ENCODE measurements at regions of chr10 and their contacts with region 1.

Region 1: DNA sequence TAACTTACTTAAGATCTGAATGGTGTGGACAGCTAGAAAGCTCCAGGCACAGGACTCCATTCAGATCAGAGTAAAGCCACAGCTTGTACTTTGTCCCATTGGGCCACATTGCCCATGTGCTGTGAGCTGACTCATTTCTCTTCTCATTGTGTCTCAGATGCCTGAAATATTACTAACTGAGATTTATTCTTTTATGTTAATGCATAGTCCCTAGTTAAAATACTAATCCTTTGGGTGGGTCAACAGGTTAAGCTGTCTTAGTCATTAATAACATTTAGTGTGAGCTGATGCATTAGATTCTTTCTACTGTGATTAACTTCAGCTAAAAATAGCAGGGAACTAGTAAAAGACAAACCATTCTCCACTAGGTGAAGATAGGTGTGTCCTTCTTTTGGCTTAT is 104.7 kb upstream of the ARMC3 start:
- DNase-seq: peak; percentile 81
- H3K4me3 ChIP-seq: no peak overlapping the region
- H3K27ac ChIP-seq: peak overlapping the region; percentile 68
- H3K4me1 ChIP-seq: peaks cover 38% of the 10 kb centered on the region
- H3K27me3 ChIP-seq: no peaks in the 10 kb centered on the region
- CTCF ChIP-seq: no peak
- POLR2A ChIP-seq: no peak

Region 2: GRCh38 chr10:22752272-22752889 is 70.7 kb before region 1 on chr10:
- CTCF ChIA-PET with region 1: interaction called, 4 read pairs
- POLR2A ChIA-PET with region 1: no interaction called
- dilution Hi-C with region 1: no loop called
- intact Hi-C with region 1: loop called (anchors 5 kb)
- DNase-seq: no peak
- H3K4me3 ChIP-seq: no peak overlapping the region
- H3K27ac ChIP-seq: no peak overlapping the region
- H3K4me1 ChIP-seq: peaks cover 10% of the 10 kb centered on the region
- H3K27me3 ChIP-seq: no peaks in the 10 kb centered on the region
- CTCF ChIP-seq: no peak
- POLR2A ChIP-seq: no peak